ENCODE measurements at regions of chr9 and their contacts with region 1.

Region 1: DNA sequence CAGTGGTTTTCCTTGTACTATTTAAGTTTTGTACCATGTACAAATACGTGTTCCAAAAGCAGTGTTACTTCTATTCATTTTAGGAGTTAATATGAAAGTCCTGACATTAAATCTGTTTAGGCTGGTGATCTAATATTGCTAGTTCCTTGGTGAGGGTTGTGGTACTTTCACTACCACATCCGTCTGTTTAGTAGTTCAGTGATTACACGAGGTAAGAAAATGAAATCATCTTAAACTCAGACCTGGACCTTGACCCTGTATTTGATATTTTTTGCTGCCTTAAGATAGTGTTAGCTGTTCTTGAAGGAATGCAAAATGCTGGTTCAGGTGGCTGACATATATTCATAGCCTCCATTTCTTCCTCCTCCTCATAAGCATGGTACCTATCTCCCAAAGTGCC is 50.3 kb downstream of the MTAP start:
- DNase-seq: no peak
- ATAC-seq: peak; percentile 78
- H3K4me3 Mint-ChIP-seq: no peak overlapping the region
- H3K27ac Mint-ChIP-seq: no peak overlapping the region
- H3K4me1 Mint-ChIP-seq: peaks cover 14% of the 10 kb centered on the region
- H3K27me3 Mint-ChIP-seq: no peaks in the 10 kb centered on the region

Region 2: DNA sequence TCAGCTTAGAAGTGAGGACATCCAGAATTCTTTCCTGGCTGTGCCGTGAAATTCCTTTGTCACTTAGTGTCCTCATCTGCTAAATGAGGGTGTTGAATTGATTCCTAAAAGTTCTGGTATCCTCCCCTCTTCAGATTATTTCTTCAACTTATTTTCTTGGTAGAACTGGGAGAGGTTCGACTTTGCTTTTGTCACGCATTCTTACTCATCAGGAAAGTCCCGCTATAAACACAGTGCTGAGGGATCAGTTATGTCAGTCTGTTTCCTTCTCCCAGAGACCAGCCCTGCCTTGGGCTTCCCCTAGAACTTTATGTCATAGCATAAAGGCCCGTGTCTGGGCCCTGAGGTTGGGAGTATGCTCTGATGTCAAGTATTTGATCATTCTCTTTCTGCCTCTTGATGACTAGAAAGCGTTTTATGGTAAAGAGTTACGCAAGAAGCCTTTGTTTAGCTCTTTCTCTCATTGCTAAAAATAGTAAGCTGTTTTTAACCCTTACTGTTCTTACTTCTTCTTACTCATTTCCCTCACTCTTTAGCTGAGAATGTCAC is 20.7 kb before region 1 on chr9:
- CTCF ChIA-PET with region 1: interaction called, 3 read pairs
- POLR2A ChIA-PET with region 1: no interaction called
- intact Hi-C with region 1: loop called in 1 of 2 experiments (anchors 2 kb)
- DNase-seq: peak; percentile 77
- ATAC-seq: peak; percentile 91
- H3K4me3 Mint-ChIP-seq: no peak overlapping the region
- H3K27ac Mint-ChIP-seq: peak overlapping the region; percentile 83
- H3K4me1 Mint-ChIP-seq: peaks cover 64% of the 10 kb centered on the region
- H3K27me3 Mint-ChIP-seq: no peaks in the 10 kb centered on the region